ENCODE measurements at regions of chr1 and their contacts with region 1.

Region 1: DNA sequence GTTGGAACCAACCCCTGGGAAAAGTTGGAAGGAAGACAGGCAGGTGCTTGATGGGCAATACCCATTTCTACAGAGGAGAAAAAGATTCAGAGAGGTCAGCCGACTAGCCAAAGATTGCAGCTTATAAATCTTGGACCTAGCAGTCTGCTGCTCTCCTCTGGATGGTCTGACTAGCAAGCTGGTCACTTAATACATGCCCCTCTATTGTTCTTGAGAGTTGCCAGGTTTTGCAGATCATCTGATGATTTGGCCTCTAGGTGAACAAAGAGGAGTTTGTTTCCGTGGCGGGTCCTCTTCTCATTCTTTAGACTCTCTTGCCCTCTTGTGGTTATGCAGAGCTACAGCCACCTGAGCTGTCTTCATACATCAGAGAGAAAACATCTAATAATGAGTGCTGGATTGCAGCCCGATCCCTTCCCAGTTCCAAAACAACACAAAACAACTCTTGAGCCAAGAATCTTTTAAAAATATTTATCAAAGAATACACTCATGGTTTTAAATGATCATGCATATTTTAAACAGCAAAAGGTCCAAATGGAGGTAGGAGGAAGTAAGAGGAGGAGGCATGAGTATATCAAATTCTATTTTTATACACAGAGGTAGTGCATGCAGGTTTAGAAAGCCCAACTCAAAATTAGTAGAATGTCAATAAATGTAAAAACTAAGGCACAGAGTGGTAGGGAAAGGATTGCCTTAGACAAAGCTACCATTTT is 115.7 kb downstream of the SLC30A10 start:
- H3K4me3 ChIP-seq: no peak overlapping the region
- H3K27ac ChIP-seq: no peak overlapping the region
- H3K4me1 ChIP-seq: no peaks in the 10 kb centered on the region
- CTCF ChIP-seq: peak; percentile 76

Region 2: GRCh38 chr1:219264561-219264960 is 548.1 kb before region 1 on chr1:
- CTCF ChIA-PET with region 1: no interaction called
- POLR2A ChIA-PET with region 1: no interaction called
- H3K4me3 ChIP-seq: no peak overlapping the region
- H3K27ac ChIP-seq: no peak overlapping the region
- H3K4me1 ChIP-seq: peaks cover 9% of the 10 kb centered on the region
- CTCF ChIP-seq: no peak

Region 3: DNA sequence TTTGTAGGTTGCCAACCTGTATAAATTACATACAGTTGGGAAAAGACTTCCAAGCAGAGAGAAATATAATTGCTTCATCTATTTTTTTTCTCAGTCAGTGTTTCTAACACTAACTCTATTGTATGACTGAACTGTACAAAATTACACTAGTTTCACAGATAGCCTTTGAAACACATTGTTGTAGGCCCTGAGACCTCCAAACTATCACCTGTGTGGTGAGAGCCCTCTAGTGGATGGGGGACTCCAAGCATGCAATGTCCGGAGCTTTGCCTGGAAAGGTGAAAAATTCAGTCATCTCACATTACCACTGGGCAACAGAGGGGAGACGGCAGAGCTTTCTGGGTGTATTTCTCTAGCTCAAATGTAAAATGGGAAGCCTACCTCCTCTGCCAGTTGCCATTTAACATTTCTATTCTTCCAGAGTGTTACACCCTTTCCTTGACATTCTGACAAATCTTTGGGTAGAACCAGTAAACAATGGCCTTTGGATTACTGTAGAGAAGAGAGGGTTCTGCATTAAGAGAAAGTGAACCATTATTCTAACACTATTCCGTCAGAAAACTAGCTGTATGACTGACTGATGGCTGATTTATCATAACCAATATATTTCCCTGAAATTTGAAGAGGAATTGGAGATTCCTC is 426.7 kb before region 1 on chr1:
- CTCF ChIA-PET with region 1: interaction called, 13 read pairs
- POLR2A ChIA-PET with region 1: no interaction called
- H3K4me3 ChIP-seq: no peak overlapping the region
- H3K27ac ChIP-seq: no peak overlapping the region
- H3K4me1 ChIP-seq: no peaks in the 10 kb centered on the region
- CTCF ChIP-seq: 0 out of 2 replicates have a peak, but pooled peaks have one; percentile 52

Region 4: DNA sequence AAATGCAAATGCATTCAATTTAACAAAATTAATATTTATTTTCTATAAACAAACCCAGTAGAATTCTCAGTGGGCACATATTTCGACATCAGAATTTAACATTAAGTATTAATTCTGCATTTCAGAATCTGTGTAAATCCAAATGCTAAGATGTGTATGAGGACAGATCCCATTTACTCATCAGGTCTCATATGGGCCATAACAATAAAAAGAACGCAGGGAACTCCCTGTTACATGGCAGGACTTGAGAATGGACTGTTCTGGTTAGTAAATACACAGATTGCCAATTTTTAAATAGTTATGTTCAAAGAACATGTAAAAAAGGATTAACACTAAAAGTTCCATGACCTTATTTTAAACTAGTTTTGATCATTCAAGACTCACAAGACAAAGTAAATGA is 11.7 kb after region 1 on chr1:
- CTCF ChIA-PET with region 1: interaction called, 12 read pairs
- POLR2A ChIA-PET with region 1: no interaction called
- H3K4me3 ChIP-seq: no peak overlapping the region
- H3K27ac ChIP-seq: no peak overlapping the region
- H3K4me1 ChIP-seq: no peaks in the 10 kb centered on the region
- CTCF ChIP-seq: no peak

Region 5: GRCh38 chr1:219927956-219928790 is 115.5 kb after region 1 on chr1 and contains the start of gene SLC30A10:
- CTCF ChIA-PET with region 1: no interaction called
- POLR2A ChIA-PET with region 1: no interaction called
- H3K4me3 ChIP-seq: peak within 1 kb of the TSS; percentile 52
- H3K27ac ChIP-seq: peak within 1 kb of the TSS; percentile 35; the same call in 1 of the 2 replicates
- H3K4me1 ChIP-seq: no peaks in the 10 kb centered on the region
- CTCF ChIP-seq: peak; percentile 96

Measured in HEK293 (cell line).